Naive thymus-derived CD4-positive, alpha-beta T cell (primary cell): ENCODE measurements at regions of chr1 and their contacts with region 1.

Region 1: DNA sequence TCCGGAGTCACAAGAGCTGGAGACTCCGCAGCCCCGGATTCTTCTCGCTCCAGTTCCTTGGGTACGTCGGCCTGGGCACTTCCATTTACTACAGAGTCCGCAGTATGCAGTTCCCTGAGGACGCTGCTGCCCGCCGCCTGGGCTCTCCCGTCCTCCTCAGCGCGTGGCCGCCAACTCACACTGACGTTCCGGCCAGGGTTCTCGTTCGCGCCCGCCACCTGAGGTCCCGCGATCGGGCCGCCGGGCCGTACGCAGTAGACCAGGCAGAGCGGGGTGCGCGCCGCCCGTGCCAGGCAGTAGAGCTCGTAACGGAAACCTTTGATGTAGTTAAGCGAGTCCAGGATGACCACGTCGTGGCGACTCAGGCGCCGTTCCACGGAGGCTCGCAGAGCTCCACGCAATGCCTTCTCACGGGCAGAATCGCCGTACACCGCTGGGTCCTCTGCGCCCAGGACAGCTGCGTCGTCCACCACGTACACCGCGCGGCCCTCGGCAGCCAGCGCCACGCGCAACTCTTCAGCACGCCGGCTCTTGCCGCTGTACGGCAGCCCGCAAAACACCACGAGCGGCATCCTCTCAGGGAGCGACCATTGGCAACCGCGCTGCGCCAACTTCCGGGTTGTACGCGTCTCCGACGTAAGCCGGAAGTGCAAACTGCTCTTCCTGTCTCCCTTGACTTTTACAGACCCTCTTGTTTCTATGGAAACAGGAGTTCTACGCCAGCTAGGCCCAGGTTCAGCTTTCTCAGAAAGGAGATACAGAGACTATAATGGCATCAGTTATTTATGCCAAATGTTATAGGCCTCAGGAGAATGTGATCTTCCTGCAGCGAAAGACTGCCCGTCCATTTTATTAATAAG is at the start of gene KTI12:
- DNase-seq: peak; percentile 72 to 92 (median 89)
- ATAC-seq: peak; percentile 95
- H3K4me3 ChIP-seq: peak within 1 kb of the TSS; percentile 94
- H3K4me3 Mint-ChIP-seq: peak within 1 kb of the TSS; percentile 91 to 96 (median 93)
- H3K27ac ChIP-seq: peak within 1 kb of the TSS; percentile 73
- H3K27ac Mint-ChIP-seq: peak within 1 kb of the TSS; percentile 92 to 97 (median 96)
- H3K4me1 ChIP-seq: peaks cover 20 to 22% of the 10 kb centered on the region in 2 donors
- H3K4me1 Mint-ChIP-seq: peaks cover 18 to 52% (median 38%) of the 10 kb centered on the region in 7 donors
- H3K27me3 ChIP-seq: no peaks in the 10 kb centered on the region
- H3K27me3 Mint-ChIP-seq: no peaks in the 10 kb centered on the region
- total RNA-seq, gene KTI12: 14.5 to 23.5 (median 16.5) TPM

Region 2: GRCh38 chr1:51616901-51617708 is 416.3 kb before region 1 on chr1 and contains the start of gene OSBPL9:
- CTCF ChIA-PET with region 1: no interaction called
- POLR2A ChIA-PET with region 1: no interaction called
- intact Hi-C with region 1: loop called in 1 of 2 experiments (anchors 5 kb)
- DNase-seq: peak; percentile 69 to 89 (median 84)
- ATAC-seq: peak; percentile 98
- H3K4me3 ChIP-seq: peak within 1 kb of the TSS; percentile 95
- H3K4me3 Mint-ChIP-seq: peak within 1 kb of the TSS; percentile 98 to 100 (median 99)
- H3K27ac ChIP-seq: peak within 1 kb of the TSS; percentile 86
- H3K27ac Mint-ChIP-seq: peak within 1 kb of the TSS; percentile 94 to 100 (median 99)
- H3K4me1 ChIP-seq: peaks cover 6 to 15% of the 10 kb centered on the region in 2 donors
- H3K4me1 Mint-ChIP-seq: peaks cover 22 to 60% (median 48%) of the 10 kb centered on the region in 7 donors
- H3K27me3 ChIP-seq: no peaks in the 10 kb centered on the region
- H3K27me3 Mint-ChIP-seq: peaks cover 0 to 6% (median 3%) of the 10 kb centered on the region in 5 donors
- total RNA-seq, gene OSBPL9: 44.5 to 56.9 (median 46.6) TPM

Region 3: GRCh38 chr1:52045236-52045635 is 11.8 kb after region 1 on chr1:
- CTCF ChIA-PET with region 1: no interaction called
- POLR2A ChIA-PET with region 1: interaction called, 5 read pairs
- intact Hi-C with region 1: loop called in 1 of 2 experiments (anchors 1 kb)
- DNase-seq: no peak
- ATAC-seq: no peak
- H3K4me3 ChIP-seq: no peak overlapping the region
- H3K4me3 Mint-ChIP-seq: no peak overlapping the region
- H3K27ac ChIP-seq: no peak overlapping the region
- H3K27ac Mint-ChIP-seq: peak overlapping the region in 1 of 9 donors; percentile 42
- H3K4me1 ChIP-seq: no peaks in the 10 kb centered on the region
- H3K4me1 Mint-ChIP-seq: peaks cover 12 to 32% (median 28%) of the 10 kb centered on the region in 7 donors
- H3K27me3 ChIP-seq: no peaks in the 10 kb centered on the region
- H3K27me3 Mint-ChIP-seq: no peaks in the 10 kb centered on the region